AG04450 (cell line): ENCODE measurements at regions of chr16 and their contacts with region 1.

Region 1: GRCh38 chr16:27235055-27235937 is 32.0 kb downstream of the KDM8 start:
- DNase-seq: no peak
- H3K4me3 ChIP-seq: no peak overlapping the region
- H3K27ac ChIP-seq: peak overlapping the region; percentile 75
- H3K27me3 ChIP-seq: no peaks in the 10 kb centered on the region
- CTCF ChIP-seq: peak; percentile 94

Region 2: DNA sequence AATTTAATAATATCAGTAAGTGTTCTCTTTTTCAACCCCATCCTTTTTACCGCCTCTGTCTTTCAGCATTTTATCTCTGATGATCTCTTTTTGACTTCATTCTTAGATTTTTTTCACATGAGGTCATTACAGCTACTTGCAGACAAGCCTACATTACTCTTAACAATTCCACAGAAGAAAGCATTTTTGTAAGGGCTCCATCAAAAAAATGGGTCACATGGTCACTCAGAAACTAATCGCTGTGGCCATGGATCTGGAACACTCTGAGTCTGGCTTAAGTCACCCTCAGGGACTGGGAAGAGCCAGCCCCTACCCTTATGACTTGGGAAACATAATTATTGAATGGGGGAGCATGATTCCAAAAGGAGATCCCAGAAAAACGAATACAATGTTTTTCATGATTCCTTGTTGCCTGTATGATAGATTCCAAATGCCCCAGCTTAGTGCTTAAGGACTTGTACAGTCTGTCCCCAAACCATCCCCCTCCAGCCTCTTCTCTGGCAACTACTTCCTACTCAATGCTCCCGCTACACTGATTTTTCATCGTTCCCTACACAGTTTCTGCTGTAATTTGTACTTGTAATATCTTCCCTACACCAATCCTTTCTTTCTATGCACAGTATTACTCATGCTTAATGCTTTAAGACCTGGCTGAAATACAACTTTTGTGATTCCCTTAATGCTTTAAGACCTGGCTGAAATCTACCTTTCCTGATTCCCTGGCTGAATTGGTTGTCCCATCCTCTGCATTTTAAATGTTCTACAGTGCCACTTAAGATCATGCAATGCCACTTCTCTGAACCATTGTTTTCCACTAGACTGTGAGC is 1085.7 kb before region 1 on chr16:
- CTCF ChIA-PET with region 1: no interaction called
- POLR2A ChIA-PET with region 1: no interaction called
- DNase-seq: no peak
- H3K4me3 ChIP-seq: no peak overlapping the region
- H3K27ac ChIP-seq: no peak overlapping the region
- H3K27me3 ChIP-seq: no peaks in the 10 kb centered on the region
- CTCF ChIP-seq: no peak

Region 3: DNA sequence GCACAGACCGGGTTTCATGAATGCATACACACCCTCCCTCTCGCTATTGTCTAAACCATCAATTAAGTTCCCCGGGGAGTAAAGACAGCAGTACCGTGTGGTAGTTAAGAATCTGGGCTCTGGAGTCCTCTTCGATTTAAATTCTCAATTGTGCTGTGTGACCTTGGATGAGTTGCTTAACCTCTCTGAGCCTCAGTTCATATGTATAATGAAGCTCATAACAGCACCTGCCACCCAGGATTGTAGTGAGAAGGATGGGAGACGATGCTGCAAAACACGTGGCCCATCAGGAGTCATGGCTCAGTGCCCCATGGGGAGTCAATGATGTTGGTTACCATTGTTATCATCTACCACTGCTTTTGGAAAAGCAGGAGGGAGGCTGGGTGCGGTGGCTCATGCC is 66.5 kb before region 1 on chr16:
- CTCF ChIA-PET with region 1: no interaction called
- POLR2A ChIA-PET with region 1: no interaction called
- DNase-seq: no peak
- H3K4me3 ChIP-seq: no peak overlapping the region
- H3K27ac ChIP-seq: no peak overlapping the region
- H3K27me3 ChIP-seq: no peaks in the 10 kb centered on the region
- CTCF ChIP-seq: no peak

Region 4: GRCh38 chr16:27179500-27180072 is 55.7 kb before region 1 on chr16:
- CTCF ChIA-PET with region 1: interaction called, 21 read pairs
- POLR2A ChIA-PET with region 1: no interaction called
- DNase-seq: no peak
- H3K4me3 ChIP-seq: no peak overlapping the region
- H3K27ac ChIP-seq: no peak overlapping the region
- H3K27me3 ChIP-seq: no peaks in the 10 kb centered on the region
- CTCF ChIP-seq: peak; percentile 79

Region 5: DNA sequence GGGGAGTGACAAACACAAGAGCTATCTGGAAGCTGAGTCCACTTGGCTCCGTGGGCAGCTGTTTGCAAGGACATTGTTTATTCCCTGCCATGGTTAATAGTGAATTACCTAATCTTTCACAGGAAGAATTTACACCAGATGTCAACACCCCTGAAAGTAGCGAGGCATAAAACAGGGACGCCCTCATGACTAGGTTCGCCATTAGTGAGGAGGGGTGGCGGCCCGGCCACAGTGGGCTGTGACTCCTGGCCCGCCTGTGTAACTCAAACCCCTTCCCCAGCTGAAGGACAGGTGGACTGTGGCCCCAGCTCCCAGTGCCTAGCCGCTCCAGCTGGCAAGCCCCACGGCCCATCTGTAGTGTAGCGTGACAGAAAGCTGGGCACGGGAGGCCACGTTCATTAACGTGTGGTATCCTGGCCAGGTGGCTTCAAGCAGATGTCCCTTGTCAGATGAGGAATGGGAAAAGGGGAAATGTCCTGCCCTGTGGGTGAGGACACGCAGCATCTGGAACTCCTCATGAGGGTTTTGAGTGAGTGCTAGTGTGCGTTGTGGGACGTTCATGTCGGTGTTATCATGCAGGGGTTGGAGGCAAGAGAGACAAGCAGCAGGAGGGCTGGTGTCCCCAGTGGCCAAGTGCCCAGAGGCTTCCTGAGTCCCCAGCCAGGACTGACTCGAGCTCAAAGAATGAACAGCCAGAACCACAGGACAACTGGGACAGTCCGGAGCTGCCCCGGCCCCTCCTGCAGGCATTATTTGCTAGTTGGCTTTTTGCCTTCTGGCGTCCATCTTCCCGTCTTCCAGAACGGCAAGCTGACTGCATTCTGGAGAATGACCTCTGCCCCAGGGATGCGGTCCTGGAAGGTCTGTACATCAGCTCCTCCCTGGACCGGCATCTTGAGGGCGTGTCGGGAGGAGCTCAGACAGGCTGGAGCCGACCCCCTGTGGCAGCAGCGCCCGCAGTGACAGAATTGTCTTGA is 12.8 kb before region 1 on chr16:
- CTCF ChIA-PET with region 1: interaction called, 30 read pairs
- POLR2A ChIA-PET with region 1: no interaction called
- DNase-seq: no peak
- H3K4me3 ChIP-seq: no peak overlapping the region
- H3K27ac ChIP-seq: peak overlapping the region; percentile 80
- H3K27me3 ChIP-seq: no peaks in the 10 kb centered on the region
- CTCF ChIP-seq: no peak

Region 6: DNA sequence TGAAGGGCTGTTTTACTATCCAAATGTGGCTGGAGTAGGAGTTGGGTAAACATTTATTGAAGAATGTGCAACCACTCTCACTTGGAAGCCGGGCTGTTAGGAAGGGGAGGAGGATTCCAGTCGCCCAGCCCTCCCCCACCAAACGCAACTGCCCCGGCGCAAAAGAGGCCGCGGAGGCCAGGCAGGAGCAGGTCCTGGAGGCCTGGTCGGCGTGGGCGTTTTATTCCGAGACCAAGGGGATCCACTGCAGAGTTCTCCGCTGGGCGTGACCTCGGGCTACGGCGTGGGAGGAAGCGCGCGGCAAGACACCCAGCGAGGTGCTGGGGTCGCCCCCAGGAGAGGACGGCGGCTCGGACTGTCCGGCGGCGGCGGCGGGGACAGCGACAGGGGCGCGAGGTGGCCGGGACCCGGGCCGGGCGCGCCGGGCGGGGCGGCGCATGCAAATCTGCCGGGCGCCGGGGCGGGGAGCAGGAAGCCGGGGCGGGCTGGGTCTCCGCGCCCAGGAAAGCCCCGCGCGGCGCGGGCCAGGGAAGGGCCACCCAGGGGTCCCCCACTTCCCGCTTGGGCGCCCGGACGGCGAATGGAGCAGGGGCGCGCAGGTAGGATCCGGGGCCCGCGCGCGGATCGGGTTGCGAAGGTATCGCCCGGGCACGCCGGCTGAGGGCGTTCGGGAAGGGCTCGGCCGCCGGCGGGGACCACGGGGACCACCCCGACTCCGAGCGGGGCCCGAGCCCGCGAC is 78.3 kb after region 1 on chr16 and contains the start of gene IL4R:
- CTCF ChIA-PET with region 1: interaction called, 17 read pairs
- POLR2A ChIA-PET with region 1: interaction called, 15 read pairs
- DNase-seq: peak; percentile 38
- H3K4me3 ChIP-seq: peak within 1 kb of the TSS; percentile 81
- H3K27ac ChIP-seq: peak within 1 kb of the TSS; percentile 85
- H3K27me3 ChIP-seq: no peaks in the 10 kb centered on the region
- CTCF ChIP-seq: no peak
- polyA plus RNA-seq, gene IL4R: 31.1 and 44.1 TPM in 2 replicates

Region 7: DNA sequence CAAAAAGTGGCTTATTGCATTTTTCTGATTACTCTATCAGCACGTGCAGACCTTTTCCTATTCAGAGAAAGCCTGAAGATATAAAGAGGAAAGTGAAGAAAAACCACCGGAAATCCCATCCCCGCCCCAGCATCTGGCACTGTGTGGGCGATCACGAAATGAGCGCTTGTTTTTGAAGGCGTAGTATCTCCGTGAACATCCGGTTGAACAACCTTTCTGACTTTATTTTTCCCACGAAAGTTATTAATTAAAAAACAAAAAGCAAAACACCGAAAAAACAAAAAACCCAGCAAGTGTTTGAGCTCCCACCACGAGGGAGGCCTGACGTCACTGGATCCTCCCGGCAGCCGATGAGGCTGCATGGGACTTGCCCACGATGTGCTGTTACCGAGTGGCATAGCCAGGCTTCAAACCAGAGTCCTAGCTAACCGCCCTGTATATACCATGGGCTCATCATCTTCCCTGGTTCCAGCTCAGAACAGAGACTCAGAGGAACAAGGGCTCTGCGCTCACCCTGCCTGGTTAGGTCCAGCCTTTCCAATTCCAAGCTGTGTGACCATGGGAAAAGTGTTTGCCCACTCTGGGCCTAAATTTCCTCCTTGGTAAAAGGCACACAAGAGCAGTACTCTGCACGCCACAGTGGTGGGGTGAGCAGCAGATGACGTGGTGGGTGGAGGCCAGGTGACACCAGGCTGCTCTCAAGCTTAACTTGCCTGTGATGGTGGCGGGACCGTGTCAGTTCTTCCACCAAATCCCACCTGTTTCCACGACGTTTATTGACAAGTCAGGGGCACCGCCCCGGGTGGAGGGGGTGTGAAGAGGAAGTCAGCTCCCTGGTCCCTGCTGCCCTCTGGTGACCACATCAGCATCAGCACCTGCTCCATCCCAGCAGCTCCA is 132.4 kb after region 1 on chr16:
- CTCF ChIA-PET with region 1: interaction called, 104 read pairs
- POLR2A ChIA-PET with region 1: interaction called, 5 read pairs
- DNase-seq: peak; percentile 20
- H3K4me3 ChIP-seq: no peak overlapping the region
- H3K27ac ChIP-seq: peak overlapping the region; percentile 11
- H3K27me3 ChIP-seq: peaks cover 3% of the 10 kb centered on the region
- CTCF ChIP-seq: peak; percentile 81

Region 8: DNA sequence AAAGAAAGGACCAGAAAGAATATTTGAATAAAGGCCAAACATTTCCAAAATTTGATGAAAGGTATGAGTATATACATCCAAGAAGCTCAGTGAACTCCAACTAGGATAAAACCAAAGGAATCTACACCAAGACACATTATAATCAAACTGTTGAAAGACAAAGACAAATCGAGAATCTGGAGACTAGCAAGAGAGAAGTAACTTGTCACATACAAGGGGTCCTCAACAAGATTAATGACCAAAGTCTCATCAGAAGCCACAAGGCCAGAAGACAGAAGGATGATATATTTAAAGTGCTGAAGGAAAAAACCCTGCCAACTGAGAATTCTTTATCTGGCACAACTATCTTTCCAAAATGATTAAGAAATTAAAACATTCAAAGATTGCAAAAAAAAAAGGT is 157.4 kb after region 1 on chr16:
- CTCF ChIA-PET with region 1: interaction called, 11 read pairs
- POLR2A ChIA-PET with region 1: no interaction called
- DNase-seq: no peak
- H3K4me3 ChIP-seq: no peak overlapping the region
- H3K27ac ChIP-seq: no peak overlapping the region
- H3K27me3 ChIP-seq: peaks cover 4% of the 10 kb centered on the region
- CTCF ChIP-seq: no peak